Breast epithelium (tissue), 4 donors: ENCODE measurements at regions of chr2 and their contacts with region 1.

Region 1: DNA sequence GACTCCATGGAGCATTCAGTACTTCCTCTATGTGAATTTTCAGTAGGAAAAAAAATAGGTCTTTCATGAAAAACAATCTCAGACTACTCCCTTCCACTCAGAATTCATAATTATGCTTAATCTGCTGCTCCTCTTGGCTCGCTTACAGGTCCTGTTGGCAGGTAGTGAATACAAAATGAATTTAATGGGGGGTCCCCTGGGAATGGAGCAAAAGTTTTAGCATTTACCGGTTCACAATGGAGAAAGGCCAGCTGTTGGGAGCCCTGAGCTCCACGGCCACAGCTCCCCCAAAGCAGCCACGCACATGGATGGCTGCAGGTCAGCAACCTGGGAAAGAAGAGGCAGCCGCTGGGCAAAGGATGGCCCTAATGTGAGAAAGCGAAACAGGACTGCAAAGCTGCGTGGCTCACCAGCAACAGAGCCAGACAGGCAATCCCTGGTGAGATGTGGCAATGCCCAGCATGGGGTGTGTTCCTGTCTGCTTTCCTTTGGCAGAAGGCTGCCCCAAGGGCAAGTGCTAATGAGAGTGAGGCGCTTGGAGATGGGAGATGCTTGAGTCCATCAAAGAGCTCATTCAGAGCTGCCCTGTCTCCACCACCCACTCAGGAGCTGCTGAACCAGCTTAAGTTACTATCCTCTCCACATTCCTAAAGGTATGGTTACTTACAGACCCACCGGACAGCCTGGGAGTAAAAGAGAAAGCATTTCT is 447.4 kb downstream of the EPHA4 start:
- DNase-seq: peak in 1 of 2 donors; percentile 78
- H3K4me3 ChIP-seq: peak overlapping the region in 2 of 3 donors; percentile 30 to 53
- H3K27ac ChIP-seq: peak overlapping the region; percentile 46 to 52
- H3K4me1 ChIP-seq: no peaks in the 10 kb centered on the region
- H3K27me3 ChIP-seq: no peaks in the 10 kb centered on the region
- CTCF ChIP-seq: no peak
- POLR2A ChIP-seq: no peak

Region 2: DNA sequence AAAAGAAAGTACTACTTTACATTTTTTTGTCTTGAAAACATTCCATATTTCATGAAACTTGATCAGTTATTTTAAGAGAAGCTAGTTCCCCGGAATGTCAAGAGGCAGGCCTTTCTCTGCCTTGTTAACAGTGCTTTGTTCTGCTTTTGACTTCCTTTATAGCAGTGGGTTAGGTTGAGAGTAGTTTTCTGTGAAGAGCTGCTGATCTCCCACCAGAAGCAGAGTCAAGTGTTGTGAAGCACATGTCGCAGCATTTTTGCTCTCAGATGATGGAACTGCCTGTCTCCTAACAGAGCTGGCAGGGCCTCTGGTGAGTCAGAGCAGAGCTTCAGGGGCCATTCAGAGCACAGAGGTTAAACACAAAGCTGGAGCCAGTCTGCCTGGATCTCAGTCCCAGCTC is 625.5 kb before region 1 on chr2:
- intact Hi-C with region 1: loop called (anchors 5 kb)
- DNase-seq: no peak
- H3K4me3 ChIP-seq: no peak overlapping the region
- H3K27ac ChIP-seq: no peak overlapping the region
- H3K4me1 ChIP-seq: no peaks in the 10 kb centered on the region
- H3K27me3 ChIP-seq: no peaks in the 10 kb centered on the region
- CTCF ChIP-seq: no peak
- POLR2A ChIP-seq: no peak